ENCODE measurements at regions of chr18 and their contacts with region 1.

Region 1: GRCh38 chr18:22324191-22325131 is 93.3 kb downstream of the CTAGE1 start:
- DNase-seq: peak in 3 of 9 experiments; percentile 25 to 37 (median 34)
- ATAC-seq: peak; percentile 49
- H3K4me3 ChIP-seq: peak overlapping the region; percentile 29 to 43
- H3K4me3 Mint-ChIP-seq: peak overlapping the region; percentile 76
- H3K27ac ChIP-seq: peak overlapping the region in 1 of 2 experiments; percentile 5
- H3K27ac Mint-ChIP-seq: peak overlapping the region; percentile 15
- H3K4me1 ChIP-seq: peaks cover 4% of the 10 kb centered on the region
- H3K4me1 Mint-ChIP-seq: peaks cover 3% of the 10 kb centered on the region
- H3K27me3 ChIP-seq: no peaks in the 10 kb centered on the region
- H3K27me3 Mint-ChIP-seq: no peaks in the 10 kb centered on the region
- CTCF ChIP-seq: no peak

Region 2: GRCh38 chr18:22335731-22336198 is 11.3 kb after region 1 on chr18:
- CTCF ChIA-PET with region 1: interaction called, 3 read pairs
- POLR2A ChIA-PET with region 1: interaction called, 5 read pairs
- intact Hi-C with region 1: loop called in 1 of 2 experiments (anchors 2 kb)
- DNase-seq: no peak
- ATAC-seq: no peak
- H3K4me3 ChIP-seq: no peak overlapping the region
- H3K4me3 Mint-ChIP-seq: no peak overlapping the region
- H3K27ac ChIP-seq: no peak overlapping the region
- H3K27ac Mint-ChIP-seq: no peak overlapping the region
- H3K4me1 ChIP-seq: peaks cover 28% of the 10 kb centered on the region
- H3K4me1 Mint-ChIP-seq: peaks cover 52% of the 10 kb centered on the region
- H3K27me3 ChIP-seq: no peaks in the 10 kb centered on the region
- H3K27me3 Mint-ChIP-seq: no peaks in the 10 kb centered on the region
- CTCF ChIP-seq: no peak

Region 3: GRCh38 chr18:22342625-22343024 is 18.2 kb after region 1 on chr18:
- CTCF ChIA-PET with region 1: no interaction called
- POLR2A ChIA-PET with region 1: interaction called, 6 read pairs
- intact Hi-C with region 1: loop called in 1 of 2 experiments (anchors 2 kb)
- DNase-seq: peak in 5 of 9 experiments; percentile 40 to 85 (median 67)
- ATAC-seq: peak; percentile 45
- H3K4me3 ChIP-seq: no peak overlapping the region
- H3K4me3 Mint-ChIP-seq: peak overlapping the region; percentile 53
- H3K27ac ChIP-seq: peak overlapping the region; percentile 75 to 88
- H3K27ac Mint-ChIP-seq: peak overlapping the region; percentile 98
- H3K4me1 ChIP-seq: peaks cover 74% of the 10 kb centered on the region
- H3K4me1 Mint-ChIP-seq: peaks cover 84% of the 10 kb centered on the region
- H3K27me3 ChIP-seq: no peaks in the 10 kb centered on the region
- H3K27me3 Mint-ChIP-seq: no peaks in the 10 kb centered on the region
- CTCF ChIP-seq: no peak